ENCODE measurements at regions of chr3 and their contacts with region 1.

Region 1: GRCh38 chr3:187507905-187508304 is 139.7 kb downstream of the RTP4 start:
- DNase-seq: no peak
- H3K4me3 ChIP-seq: no peak overlapping the region
- H3K27ac ChIP-seq: no peak overlapping the region
- H3K4me1 ChIP-seq: no peaks in the 10 kb centered on the region
- H3K27me3 ChIP-seq: no peaks in the 10 kb centered on the region
- CTCF ChIP-seq: no peak

Region 2: DNA sequence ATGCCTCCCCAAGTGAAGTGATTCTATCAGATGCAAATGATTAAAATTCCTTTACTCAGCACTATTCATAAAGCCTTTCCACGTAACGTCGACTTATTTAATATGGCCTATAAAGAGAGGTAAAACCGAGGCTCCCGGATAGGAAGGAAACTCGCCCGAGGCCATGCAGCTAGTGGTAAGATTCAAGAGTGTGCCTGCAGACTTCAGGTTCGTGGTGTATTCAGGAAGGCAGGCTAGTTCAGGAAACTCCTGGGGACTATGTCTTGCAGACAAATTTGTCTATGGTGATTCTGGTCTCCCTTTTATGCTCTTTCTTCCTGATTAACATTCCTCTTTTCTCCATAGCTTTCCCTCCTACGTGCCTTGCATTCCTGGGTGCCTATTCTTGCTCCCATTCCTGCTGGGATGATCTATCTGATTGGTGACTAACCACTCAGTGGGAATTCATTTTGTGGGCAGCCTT is 11.6 kb after region 1 on chr3:
- CTCF ChIA-PET with region 1: no interaction called
- POLR2A ChIA-PET with region 1: no interaction called
- intact Hi-C with region 1: loop called (anchors 2 kb)
- DNase-seq: peak; percentile 72
- H3K4me3 ChIP-seq: no peak overlapping the region
- H3K27ac ChIP-seq: no peak overlapping the region
- H3K4me1 ChIP-seq: peaks cover 10% of the 10 kb centered on the region
- H3K27me3 ChIP-seq: no peaks in the 10 kb centered on the region
- CTCF ChIP-seq: no peak

Measured in A673 (cell line).